ENCODE measurements at regions of chr4 and their contacts with region 1.

Region 1: DNA sequence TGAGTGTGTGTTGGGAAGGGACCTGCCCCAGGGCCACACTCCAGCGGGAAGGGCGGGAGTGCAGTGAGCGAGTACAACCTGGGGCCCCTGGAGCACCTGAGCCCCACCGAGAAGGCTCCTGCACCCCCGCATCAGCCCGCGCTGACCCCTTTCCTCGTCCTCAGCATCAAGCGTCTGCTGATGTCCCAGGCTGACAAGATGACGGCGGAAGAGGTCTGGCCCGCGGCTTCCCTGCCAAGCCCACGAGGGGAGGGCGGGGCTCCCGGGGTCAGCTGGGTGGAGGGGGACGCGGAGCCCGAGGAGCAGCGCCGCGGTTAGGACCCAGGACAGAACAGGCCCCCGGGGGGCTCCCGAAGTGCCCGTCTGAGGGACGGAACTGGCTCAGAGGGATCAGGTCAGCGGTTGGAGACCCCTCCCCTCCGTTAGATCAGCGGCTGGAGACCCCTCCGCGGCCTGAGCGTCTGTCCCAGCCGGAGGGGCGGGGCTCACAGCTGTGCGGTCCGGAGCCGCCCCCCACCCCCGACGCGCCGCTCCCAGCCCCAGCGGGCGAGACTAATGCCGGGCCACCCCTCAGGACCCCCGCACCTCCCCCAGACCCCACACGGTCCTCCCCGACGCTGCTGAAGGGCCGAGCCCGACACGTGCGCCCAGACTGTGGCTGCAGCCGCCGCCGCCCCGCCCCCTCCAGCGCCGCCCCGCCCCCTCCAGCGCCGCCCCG is 6.7 kb downstream of the MYL5 start:
- DNase-seq: peak; percentile 67 to 69
- ATAC-seq: peak; percentile 80 to 88 (median 85)
- H3K4me3 ChIP-seq: peak overlapping the region; percentile 30
- H3K4me3 Mint-ChIP-seq: peak overlapping the region; percentile 69
- H3K27ac ChIP-seq: peak overlapping the region; percentile 76
- H3K27ac Mint-ChIP-seq: peak overlapping the region; percentile 90
- H3K4me1 ChIP-seq: peaks cover 37% of the 10 kb centered on the region
- H3K4me1 Mint-ChIP-seq: peaks cover 11 to 27% of the 10 kb centered on the region in 2 donors
- H3K27me3 ChIP-seq: no peaks in the 10 kb centered on the region
- H3K27me3 Mint-ChIP-seq: no peaks in the 10 kb centered on the region
- CTCF ChIP-seq: no peak

Region 2: GRCh38 chr4:650951-651883 is 29.9 kb before region 1 on chr4:
- intact Hi-C with region 1: no loop called
- DNase-seq: no peak
- ATAC-seq: no peak
- H3K4me3 ChIP-seq: no peak overlapping the region
- H3K4me3 Mint-ChIP-seq: no peak overlapping the region
- H3K27ac ChIP-seq: no peak overlapping the region
- H3K27ac Mint-ChIP-seq: no peak overlapping the region
- H3K4me1 ChIP-seq: no peaks in the 10 kb centered on the region
- H3K4me1 Mint-ChIP-seq: no peaks in the 10 kb centered on the region
- H3K27me3 ChIP-seq: no peaks in the 10 kb centered on the region
- H3K27me3 Mint-ChIP-seq: peaks cover 8% of the 10 kb centered on the region in 2 donors
- CTCF ChIP-seq: no peak

Region 3: DNA sequence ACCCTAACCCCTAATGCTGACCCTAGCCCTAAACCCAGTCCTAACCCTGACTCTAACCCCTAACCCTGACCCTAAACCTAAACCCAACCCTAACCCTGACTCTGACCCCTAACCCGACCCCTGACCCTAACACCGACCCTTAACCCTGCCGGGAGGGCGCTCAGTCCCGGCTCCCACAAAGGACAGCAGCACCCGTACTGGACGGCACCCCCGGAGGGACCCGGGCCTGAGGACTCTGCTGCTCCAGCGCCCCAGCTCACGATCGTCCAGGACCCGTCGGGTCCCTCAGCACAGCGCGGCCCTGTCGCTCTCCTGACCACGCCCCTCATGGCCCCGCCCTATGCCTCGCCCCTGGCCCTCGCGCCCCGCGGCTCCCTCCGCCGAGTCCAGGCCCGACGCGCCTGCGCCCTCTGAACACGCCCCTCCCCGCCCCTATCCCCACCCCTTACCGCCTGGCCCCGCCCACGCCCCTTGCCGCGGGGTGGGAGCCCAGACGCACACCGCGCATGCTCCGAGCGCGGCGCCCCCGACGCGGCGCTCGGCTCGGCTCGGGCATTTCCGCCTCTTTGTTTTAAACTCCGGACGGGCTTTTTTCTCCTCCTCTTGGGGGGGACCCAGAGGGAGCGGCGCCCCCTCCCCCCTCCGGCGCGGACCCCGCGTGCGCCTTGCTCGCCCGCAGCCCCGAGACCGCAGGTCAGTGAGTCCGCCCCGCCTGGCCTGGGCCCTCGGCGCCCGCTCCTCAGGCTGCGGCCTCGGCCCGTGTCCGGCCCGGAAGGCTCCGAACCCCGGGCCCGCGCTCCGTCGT is 24.4 kb after region 1 on chr4 and contains the start of gene PCGF3:
- intact Hi-C with region 1: loop called (anchors 2 kb)
- DNase-seq: peak; percentile 91 to 96
- ATAC-seq: peak; percentile 95 to 99 (median 97)
- H3K4me3 ChIP-seq: peak within 1 kb of the TSS; percentile 56
- H3K4me3 Mint-ChIP-seq: peak within 1 kb of the TSS; percentile 87
- H3K27ac ChIP-seq: peak within 1 kb of the TSS; percentile 70
- H3K27ac Mint-ChIP-seq: peak within 1 kb of the TSS; percentile 68 to 91
- H3K4me1 ChIP-seq: peaks cover 32% of the 10 kb centered on the region
- H3K4me1 Mint-ChIP-seq: peaks cover 13 to 37% of the 10 kb centered on the region in 2 donors
- H3K27me3 ChIP-seq: no peaks in the 10 kb centered on the region
- H3K27me3 Mint-ChIP-seq: no peaks in the 10 kb centered on the region
- CTCF ChIP-seq: no peak
- total RNA-seq, gene PCGF3: 71.2 to 101 (median 97.2) TPM

Region 4: DNA sequence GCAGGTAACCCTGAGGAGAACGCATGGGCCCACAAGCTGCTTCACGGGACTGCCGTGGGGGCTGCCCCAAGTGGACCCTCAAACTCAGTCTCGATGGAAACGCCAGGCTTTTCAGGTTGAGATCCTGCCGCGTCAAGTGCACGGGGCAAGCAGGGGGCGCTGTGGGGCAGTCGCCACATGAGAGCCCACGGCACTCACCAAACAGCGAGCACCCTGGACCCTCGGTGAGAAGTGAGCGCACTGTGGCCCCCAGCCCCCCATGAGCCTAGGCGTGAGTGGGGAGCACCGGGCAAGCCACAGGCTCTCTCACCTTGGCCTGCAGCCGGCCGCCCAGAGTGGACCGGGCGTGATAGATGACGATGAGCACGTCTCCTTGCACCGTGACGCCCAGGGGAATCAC is 195.7 kb after region 1 on chr4:
- intact Hi-C with region 1: no loop called
- DNase-seq: peak in 1 of 2 donors; percentile 28
- ATAC-seq: no peak
- H3K4me3 ChIP-seq: no peak overlapping the region
- H3K4me3 Mint-ChIP-seq: no peak overlapping the region
- H3K27ac ChIP-seq: no peak overlapping the region
- H3K27ac Mint-ChIP-seq: peak overlapping the region in 1 of 2 donors; percentile 40
- H3K4me1 ChIP-seq: peaks cover 10% of the 10 kb centered on the region
- H3K4me1 Mint-ChIP-seq: peaks cover 18 to 26% of the 10 kb centered on the region in 2 donors
- H3K27me3 ChIP-seq: no peaks in the 10 kb centered on the region
- H3K27me3 Mint-ChIP-seq: no peaks in the 10 kb centered on the region
- CTCF ChIP-seq: no peak

Region 5: GRCh38 chr4:891747-892146 is 210.7 kb after region 1 on chr4:
- intact Hi-C with region 1: no loop called
- DNase-seq: peak in 1 of 2 donors; percentile 28
- ATAC-seq: peak in 1 of 3 donors; percentile 36
- H3K4me3 ChIP-seq: no peak overlapping the region
- H3K4me3 Mint-ChIP-seq: no peak overlapping the region
- H3K27ac ChIP-seq: no peak overlapping the region
- H3K27ac Mint-ChIP-seq: peak overlapping the region in 1 of 2 donors; percentile 40
- H3K4me1 ChIP-seq: no peaks in the 10 kb centered on the region
- H3K4me1 Mint-ChIP-seq: peaks cover 0 to 8% of the 10 kb centered on the region in 2 donors
- H3K27me3 ChIP-seq: no peaks in the 10 kb centered on the region
- H3K27me3 Mint-ChIP-seq: no peaks in the 10 kb centered on the region
- CTCF ChIP-seq: no peak